K562 (cell line): ENCODE measurements at regions of chr9 and their contacts with region 1.

Region 1: DNA sequence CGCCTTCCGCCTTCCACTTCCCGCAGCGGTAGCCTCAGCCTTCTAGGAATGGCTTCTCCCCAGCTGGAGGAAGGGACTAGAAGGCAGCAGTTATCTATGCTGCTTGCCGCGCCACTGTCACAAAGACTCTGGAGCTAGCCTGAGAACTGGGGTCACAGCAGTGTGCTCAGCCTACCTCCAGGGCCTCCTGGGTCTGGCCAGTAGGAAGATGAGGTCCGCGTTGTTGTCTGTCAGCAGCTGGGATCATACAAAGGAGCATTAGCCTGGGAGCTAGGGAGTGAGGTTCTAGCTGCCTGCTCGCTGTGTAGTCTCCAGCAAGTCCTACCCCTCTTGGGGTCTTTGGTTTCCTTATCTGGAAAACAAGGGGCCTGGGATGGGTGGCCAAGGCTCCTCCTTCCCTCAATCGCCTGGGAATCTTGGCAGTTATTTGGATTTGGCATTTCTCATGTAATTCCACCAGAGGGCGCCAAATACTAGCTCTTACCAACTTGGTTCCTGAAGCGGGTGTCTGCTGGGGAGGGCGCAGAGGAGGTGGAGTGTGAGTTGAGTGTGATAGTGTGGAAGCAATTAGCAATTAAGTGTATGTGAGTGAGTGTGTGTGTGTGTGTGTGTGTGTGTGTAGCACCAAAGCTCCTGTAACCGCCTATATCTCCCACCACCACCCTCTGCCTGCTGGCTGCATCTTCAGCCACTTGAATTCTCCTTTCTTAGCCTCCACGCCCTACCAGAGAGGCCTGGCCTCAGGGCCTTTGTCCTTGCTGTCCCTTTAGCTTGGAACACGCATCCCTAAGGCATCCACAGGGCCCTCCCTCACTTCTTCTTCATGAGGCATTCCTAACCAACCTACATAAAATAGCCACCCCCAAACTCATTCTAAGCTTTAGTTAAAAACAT is 97.1 kb downstream of the ENTREP1 start:
- DNase-seq: peak; percentile 54 to 70 (median 61)
- ATAC-seq: peak; percentile 83
- H3K4me3 ChIP-seq: no peak overlapping the region
- H3K27ac ChIP-seq: no peak overlapping the region
- H3K4me1 ChIP-seq: no peaks in the 10 kb centered on the region
- H3K27me3 ChIP-seq: peaks cover 2 to 15% of the 10 kb centered on the region in 2 experiments; a peak in 2 of 5 replicates
- CTCF ChIP-seq: peak; percentile 68 to 81 (median 76)
- EP300 ChIP-seq: no peak
- POLR2A ChIP-seq: no peak
- RAD21 ChIP-seq: peak; percentile 71 to 89

Region 2: DNA sequence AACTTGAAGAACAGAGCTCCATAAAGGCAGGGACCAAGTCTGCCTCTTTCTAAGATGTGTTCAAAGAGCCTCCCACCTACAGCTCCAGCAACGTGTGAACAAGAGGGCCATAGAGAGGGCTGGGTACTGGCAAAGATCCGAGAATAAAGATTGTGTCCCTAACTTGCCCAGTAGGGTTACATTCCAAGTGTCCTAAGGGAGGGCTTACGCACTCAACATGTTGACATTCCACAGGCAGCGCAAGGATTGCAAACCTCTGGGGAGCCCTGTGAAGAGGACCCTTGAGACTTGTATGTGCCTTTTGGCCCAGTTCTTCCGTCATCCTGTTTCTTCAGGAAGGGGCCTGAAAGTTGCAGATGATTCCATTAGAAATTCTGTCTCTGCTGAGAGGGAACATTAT is 145.4 kb before region 1 on chr9:
- CTCF ChIA-PET with region 1: no interaction called
- POLR2A ChIA-PET with region 1: no interaction called
- in situ Hi-C with region 1: no loop called
- intact Hi-C with region 1: no loop called
- DNase-seq: no peak
- ATAC-seq: no peak
- H3K4me3 ChIP-seq: no peak overlapping the region
- H3K27ac ChIP-seq: no peak overlapping the region
- H3K4me1 ChIP-seq: no peaks in the 10 kb centered on the region
- H3K27me3 ChIP-seq: no peaks in the 10 kb centered on the region; a peak in 1 of 5 replicates
- CTCF ChIP-seq: no peak
- EP300 ChIP-seq: no peak
- POLR2A ChIP-seq: no peak
- RAD21 ChIP-seq: no peak

Region 3: GRCh38 chr9:69471433-69471832 is 49.3 kb after region 1 on chr9:
- CTCF ChIA-PET with region 1: no interaction called
- POLR2A ChIA-PET with region 1: no interaction called
- in situ Hi-C with region 1: no loop called
- intact Hi-C with region 1: no loop called
- DNase-seq: no peak
- ATAC-seq: no peak
- H3K4me3 ChIP-seq: no peak overlapping the region
- H3K27ac ChIP-seq: no peak overlapping the region
- H3K4me1 ChIP-seq: no peaks in the 10 kb centered on the region
- H3K27me3 ChIP-seq: peaks cover 0 to 6% of the 10 kb centered on the region in 2 experiments; a peak in 2 of 5 replicates
- CTCF ChIP-seq: no peak
- EP300 ChIP-seq: no peak
- POLR2A ChIP-seq: no peak
- RAD21 ChIP-seq: no peak

Region 4: GRCh38 chr9:69549310-69550202 is 127.4 kb after region 1 on chr9:
- CTCF ChIA-PET with region 1: no interaction called
- POLR2A ChIA-PET with region 1: no interaction called
- in situ Hi-C with region 1: no loop called
- intact Hi-C with region 1: loop called (anchors 2 kb)
- DNase-seq: peak; percentile 26 to 32 (median 29)
- ATAC-seq: peak; percentile 56; the same call in 2 of the 3 replicates
- H3K4me3 ChIP-seq: no peak overlapping the region
- H3K27ac ChIP-seq: no peak overlapping the region
- H3K4me1 ChIP-seq: no peaks in the 10 kb centered on the region
- H3K27me3 ChIP-seq: peaks cover 0 to 8% of the 10 kb centered on the region in 2 experiments; a peak in 1 of 5 replicates
- CTCF ChIP-seq: peak; percentile 55 to 67 (median 62)
- EP300 ChIP-seq: no peak
- POLR2A ChIP-seq: no peak
- RAD21 ChIP-seq: peak; percentile 59 to 67

Region 5: GRCh38 chr9:69877854-69878514 is 455.8 kb after region 1 on chr9:
- CTCF ChIA-PET with region 1: interaction called, 5 read pairs
- POLR2A ChIA-PET with region 1: no interaction called
- in situ Hi-C with region 1: no loop called
- intact Hi-C with region 1: loop called (anchors 5 kb)
- DNase-seq: peak in 2 of 4 experiments; percentile 10 to 24
- ATAC-seq: peak; percentile 53; the same call in 2 of the 3 replicates
- H3K4me3 ChIP-seq: no peak overlapping the region
- H3K27ac ChIP-seq: no peak overlapping the region
- H3K4me1 ChIP-seq: no peaks in the 10 kb centered on the region
- H3K27me3 ChIP-seq: no peaks in the 10 kb centered on the region
- CTCF ChIP-seq: peak; percentile 17 to 61 (median 51); a peak in 5 of 6 replicates
- EP300 ChIP-seq: no peak
- POLR2A ChIP-seq: no peak
- RAD21 ChIP-seq: peak; percentile 41 to 70

Region 6: GRCh38 chr9:69932901-69933300 is 510.7 kb after region 1 on chr9:
- CTCF ChIA-PET with region 1: interaction called, 13 read pairs
- POLR2A ChIA-PET with region 1: no interaction called
- in situ Hi-C with region 1: loop called (anchors 10 kb)
- intact Hi-C with region 1: loop called (anchors 2 kb)
- DNase-seq: peak in 3 of 4 experiments; percentile 6 to 23 (median 6)
- ATAC-seq: peak; percentile 63; the same call in 2 of the 3 replicates
- H3K4me3 ChIP-seq: no peak overlapping the region
- H3K27ac ChIP-seq: no peak overlapping the region
- H3K4me1 ChIP-seq: no peaks in the 10 kb centered on the region; a peak in 1 of 5 replicates
- H3K27me3 ChIP-seq: no peaks in the 10 kb centered on the region
- CTCF ChIP-seq: peak; percentile 26 to 36 (median 29); a peak in 4 of 6 replicates
- EP300 ChIP-seq: no peak
- POLR2A ChIP-seq: no peak
- RAD21 ChIP-seq: peak in 1 of 2 experiments; percentile 39; a peak in 1 of 4 replicates